ENCODE measurements at regions of chr2 and their contacts with region 1.

Region 1: DNA sequence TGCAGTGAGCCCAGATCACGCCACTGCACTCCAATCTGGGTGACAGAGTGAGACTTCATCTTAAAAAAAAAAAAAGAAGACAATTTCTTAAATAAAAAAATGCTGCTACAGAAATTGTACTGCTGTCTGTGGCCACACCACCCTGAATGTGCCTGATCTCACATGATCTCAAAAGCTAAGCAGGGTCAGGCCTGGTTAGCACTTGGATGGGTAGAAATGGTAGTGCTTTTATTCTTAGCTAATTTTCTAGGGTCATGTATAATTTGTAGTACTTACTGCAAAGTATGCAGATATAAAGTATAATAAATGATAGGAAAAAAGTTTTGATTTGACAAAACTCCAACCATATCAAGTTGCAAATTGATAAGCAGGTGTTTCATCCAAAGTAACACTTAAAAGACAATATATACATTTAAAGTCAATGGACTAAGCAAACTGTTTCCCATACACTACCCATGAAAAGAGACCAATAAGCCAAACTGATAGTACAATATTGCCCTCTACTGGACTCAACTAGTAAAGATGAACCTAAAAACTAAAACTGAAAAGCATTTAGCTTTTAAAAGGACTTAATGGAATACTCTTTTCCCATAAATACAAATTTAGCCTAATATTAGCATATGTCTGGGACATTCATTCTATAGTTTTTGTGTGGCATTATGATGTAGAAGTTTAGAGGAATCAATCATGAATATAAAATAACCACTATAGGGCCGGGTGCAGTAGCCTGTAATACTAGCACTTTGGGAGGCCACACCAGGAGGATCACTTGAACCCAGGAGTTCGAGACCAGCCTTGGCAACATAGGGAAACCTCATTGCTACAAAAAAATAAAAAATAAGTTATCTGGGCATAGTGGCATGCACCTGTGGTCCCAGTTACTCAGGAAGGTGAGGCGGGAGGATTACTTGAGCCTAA is 18.6 kb upstream of the PEX13 start:
- DNase-seq: no peak
- ATAC-seq: peak; percentile 63
- H3K4me3 ChIP-seq: no peak overlapping the region
- H3K27ac ChIP-seq: no peak overlapping the region
- H3K4me1 ChIP-seq: no peaks in the 10 kb centered on the region
- H3K27me3 ChIP-seq: no peaks in the 10 kb centered on the region

Region 2: GRCh38 chr2:60707750-60708371 is 291.0 kb before region 1 on chr2:
- intact Hi-C with region 1: loop called (anchors 2 kb)
- DNase-seq: no peak
- ATAC-seq: peak; percentile 75
- H3K4me3 ChIP-seq: no peak overlapping the region
- H3K27ac ChIP-seq: no peak overlapping the region
- H3K4me1 ChIP-seq: no peaks in the 10 kb centered on the region
- H3K27me3 ChIP-seq: no peaks in the 10 kb centered on the region

Region 3: GRCh38 chr2:60881047-60881932 is 117.6 kb before region 1 on chr2 and contains the start of gene REL:
- intact Hi-C with region 1: loop called in 1 of 2 experiments (anchors 2 kb)
- DNase-seq: peak; percentile 96 to 97
- ATAC-seq: peak; percentile 98
- H3K4me3 ChIP-seq: peak within 1 kb of the TSS; percentile 87 to 97
- H3K27ac ChIP-seq: peak within 1 kb of the TSS; percentile 59 to 83
- H3K4me1 ChIP-seq: peaks cover 0 to 6% of the 10 kb centered on the region in 2 donors
- H3K27me3 ChIP-seq: no peaks in the 10 kb centered on the region
- total RNA-seq, gene REL: 16.0 to 23.8 TPM

Region 4: DNA sequence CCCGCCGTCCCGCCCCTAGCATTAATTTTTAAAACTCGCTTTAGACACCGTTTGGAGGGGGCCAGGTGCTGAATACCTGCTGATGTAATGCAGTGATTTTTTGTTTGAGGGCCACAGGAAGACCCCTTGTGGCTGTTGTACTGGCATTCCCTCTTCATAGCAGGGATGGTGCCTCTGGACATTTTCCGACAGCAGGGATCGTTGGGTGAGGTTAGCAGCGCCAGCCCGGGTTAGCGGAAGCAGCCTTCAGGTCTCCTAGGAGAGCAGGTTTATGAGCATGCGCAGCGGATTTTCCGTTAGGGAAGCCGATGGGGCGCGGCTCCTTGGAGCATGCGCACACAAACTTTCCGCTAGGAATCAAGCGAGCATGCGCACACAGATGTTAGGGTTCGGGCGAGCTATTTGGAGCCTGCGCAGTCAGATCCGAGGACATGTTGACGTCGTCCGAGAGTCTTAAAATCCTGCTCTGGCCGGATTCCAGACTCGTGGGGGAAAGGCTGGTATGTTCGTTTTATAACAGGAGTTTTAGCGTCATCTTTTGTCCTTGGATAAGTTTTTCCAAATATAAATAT is 145.9 kb after region 1 on chr2:
- intact Hi-C with region 1: no loop called
- DNase-seq: peak; percentile 97 to 98
- ATAC-seq: peak; percentile 97
- H3K4me3 ChIP-seq: peak overlapping the region; percentile 52 to 83
- H3K27ac ChIP-seq: peak overlapping the region in 1 of 2 donors; percentile 67
- H3K4me1 ChIP-seq: no peaks in the 10 kb centered on the region
- H3K27me3 ChIP-seq: no peaks in the 10 kb centered on the region

Measured in aorta (tissue), 5 donors.